Endothelial cell of umbilical vein (primary cell): ENCODE measurements at regions of chr3 and their contacts with region 1.

Region 1: GRCh38 chr3:171860830-171861535 is 17.8 kb downstream of the TMEM212 start:
- DNase-seq: peak; percentile 96
- H3K4me3 ChIP-seq: no peak overlapping the region
- H3K27ac ChIP-seq: peak overlapping the region; percentile 95
- H3K4me1 ChIP-seq: peaks cover 57% of the 10 kb centered on the region
- H3K27me3 ChIP-seq: no peaks in the 10 kb centered on the region
- CTCF ChIP-seq: no peak
- POLR2A ChIP-seq: no peak

Region 2: GRCh38 chr3:171788546-171789351 is 72.2 kb before region 1 on chr3:
- CTCF ChIA-PET with region 1: interaction called, 4 read pairs
- POLR2A ChIA-PET with region 1: no interaction called
- dilution Hi-C with region 1: no loop called
- intact Hi-C with region 1: loop called (anchors 1 kb)
- DNase-seq: peak; percentile 92
- H3K4me3 ChIP-seq: no peak overlapping the region
- H3K27ac ChIP-seq: peak overlapping the region; percentile 99
- H3K4me1 ChIP-seq: peaks cover 75% of the 10 kb centered on the region
- H3K27me3 ChIP-seq: no peaks in the 10 kb centered on the region
- CTCF ChIP-seq: no peak
- POLR2A ChIP-seq: no peak

Region 3: DNA sequence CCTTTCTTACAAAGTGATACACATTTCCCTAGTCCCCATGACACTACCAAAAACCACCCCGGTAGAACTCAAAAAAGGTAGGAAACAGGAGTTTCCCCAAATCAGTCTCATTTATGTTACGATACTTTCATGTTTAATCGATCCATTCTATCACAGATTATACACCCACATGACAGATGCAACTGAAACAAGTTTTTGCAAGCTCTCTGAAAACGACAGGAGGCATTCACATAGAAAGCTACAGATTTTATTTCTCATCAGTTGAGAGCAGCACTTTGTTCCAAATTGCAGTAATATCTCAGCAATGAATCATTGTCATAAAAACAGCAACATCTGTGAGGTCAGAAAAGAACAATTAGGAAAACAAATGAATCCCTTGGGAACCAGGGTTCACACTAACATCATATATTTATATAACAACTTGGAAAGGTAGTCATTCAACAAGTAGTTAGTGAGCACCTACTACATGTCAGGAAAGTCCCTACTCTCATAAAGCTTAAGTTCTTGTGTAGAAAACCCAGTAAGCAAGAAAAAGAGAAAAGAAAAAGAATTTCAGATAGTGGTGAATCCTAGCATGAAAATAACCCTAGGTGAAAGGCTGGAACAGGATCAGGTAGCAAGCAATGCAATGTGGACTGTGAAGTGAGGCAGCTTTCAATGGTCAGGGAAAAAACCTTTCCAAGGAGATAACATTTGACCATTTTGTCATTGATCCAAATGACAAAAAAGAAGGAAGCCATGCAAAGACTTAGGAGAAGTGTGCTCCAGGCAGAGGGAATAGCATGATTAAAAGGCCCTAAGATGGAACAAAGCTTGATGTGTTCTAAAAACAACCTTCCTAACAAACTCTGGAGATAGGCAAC is 59.0 kb before region 1 on chr3:
- CTCF ChIA-PET with region 1: no interaction called
- POLR2A ChIA-PET with region 1: no interaction called
- dilution Hi-C with region 1: no loop called
- intact Hi-C with region 1: loop called (anchors 1 kb)
- DNase-seq: peak; percentile 97
- H3K4me3 ChIP-seq: no peak overlapping the region
- H3K27ac ChIP-seq: peak overlapping the region; percentile 97
- H3K4me1 ChIP-seq: peaks cover 86% of the 10 kb centered on the region
- H3K27me3 ChIP-seq: no peaks in the 10 kb centered on the region
- CTCF ChIP-seq: no peak
- POLR2A ChIP-seq: peak; percentile 40

Region 4: DNA sequence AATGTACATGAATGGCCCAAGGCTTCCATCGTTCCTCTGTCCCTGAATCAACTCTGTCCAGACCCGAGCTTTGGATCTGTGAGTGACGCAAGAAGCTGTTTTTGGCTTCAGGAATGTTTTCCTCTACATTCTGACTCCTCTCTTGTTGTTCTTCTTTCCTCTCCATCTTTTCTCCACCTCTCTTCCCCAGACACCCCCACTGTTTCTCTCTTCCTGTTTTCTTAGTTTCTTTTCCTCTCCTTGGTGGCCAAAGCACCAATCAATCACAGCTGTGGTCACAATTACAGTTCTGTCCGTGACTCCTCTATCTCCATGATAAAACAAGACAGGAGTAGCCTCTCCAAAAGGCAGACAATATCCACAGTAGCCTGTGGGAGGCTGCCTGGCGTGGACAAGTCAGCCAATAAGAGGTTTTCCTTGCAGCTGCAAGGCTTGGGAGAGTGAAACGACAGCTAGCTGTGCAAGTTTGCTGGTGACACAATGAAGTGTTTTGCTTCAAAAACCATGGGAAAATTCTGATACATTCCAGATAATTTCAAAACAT is 22.7 kb before region 1 on chr3:
- CTCF ChIA-PET with region 1: interaction called, 8 read pairs
- POLR2A ChIA-PET with region 1: interaction called, 5 read pairs
- dilution Hi-C with region 1: no loop called
- intact Hi-C with region 1: loop called (anchors 1 kb)
- DNase-seq: peak; percentile 94
- H3K4me3 ChIP-seq: no peak overlapping the region
- H3K27ac ChIP-seq: peak overlapping the region; percentile 77
- H3K4me1 ChIP-seq: peaks cover 64% of the 10 kb centered on the region
- H3K27me3 ChIP-seq: no peaks in the 10 kb centered on the region
- CTCF ChIP-seq: peak in 1 of 2 donors; percentile 12
- POLR2A ChIP-seq: no peak

Region 5: GRCh38 chr3:171883257-171883892 is 22.4 kb after region 1 on chr3:
- CTCF ChIA-PET with region 1: no interaction called
- POLR2A ChIA-PET with region 1: no interaction called
- dilution Hi-C with region 1: no loop called
- intact Hi-C with region 1: no loop called
- DNase-seq: peak; percentile 12
- H3K4me3 ChIP-seq: no peak overlapping the region
- H3K27ac ChIP-seq: no peak overlapping the region
- H3K4me1 ChIP-seq: peaks cover 2% of the 10 kb centered on the region
- H3K27me3 ChIP-seq: no peaks in the 10 kb centered on the region
- CTCF ChIP-seq: no peak
- POLR2A ChIP-seq: no peak

Region 6: DNA sequence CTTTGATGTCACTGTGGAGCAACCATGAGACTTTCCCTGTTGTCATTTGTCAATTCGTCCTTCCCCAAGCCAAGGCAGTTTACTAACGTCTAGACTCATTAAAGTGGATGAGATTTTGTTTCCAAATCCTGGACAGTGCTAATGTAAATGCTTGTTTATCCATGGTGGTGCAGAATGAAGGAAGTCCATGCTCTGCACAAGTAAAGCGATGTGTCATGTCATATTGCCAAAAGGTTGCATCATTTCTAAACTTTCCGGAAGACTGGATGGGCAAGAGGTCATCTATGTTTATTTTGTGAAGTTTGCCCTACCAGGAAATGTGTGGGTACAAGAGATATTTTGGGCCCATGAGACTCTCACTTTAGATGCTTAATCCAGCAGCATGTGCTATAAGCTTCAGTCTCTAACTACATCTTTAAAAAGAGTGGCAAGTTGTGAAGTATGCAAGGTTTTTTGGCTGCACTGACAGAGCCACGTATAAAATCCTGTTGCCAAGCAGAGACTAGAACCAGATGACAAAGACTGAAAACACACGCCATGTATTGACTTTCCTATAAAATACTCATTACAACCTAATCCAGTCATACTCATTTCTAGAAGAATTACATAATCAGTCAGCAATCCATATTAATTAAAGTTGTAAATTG is 106.3 kb after region 1 on chr3:
- CTCF ChIA-PET with region 1: no interaction called
- POLR2A ChIA-PET with region 1: no interaction called
- dilution Hi-C with region 1: no loop called
- intact Hi-C with region 1: loop called (anchors 5 kb)
- DNase-seq: peak; percentile 86
- H3K4me3 ChIP-seq: no peak overlapping the region
- H3K27ac ChIP-seq: peak overlapping the region; percentile 71
- H3K4me1 ChIP-seq: peaks cover 20% of the 10 kb centered on the region
- H3K27me3 ChIP-seq: no peaks in the 10 kb centered on the region
- CTCF ChIP-seq: no peak
- POLR2A ChIP-seq: no peak